ENCODE measurements at regions of chr3 and their contacts with region 1.

Region 1: DNA sequence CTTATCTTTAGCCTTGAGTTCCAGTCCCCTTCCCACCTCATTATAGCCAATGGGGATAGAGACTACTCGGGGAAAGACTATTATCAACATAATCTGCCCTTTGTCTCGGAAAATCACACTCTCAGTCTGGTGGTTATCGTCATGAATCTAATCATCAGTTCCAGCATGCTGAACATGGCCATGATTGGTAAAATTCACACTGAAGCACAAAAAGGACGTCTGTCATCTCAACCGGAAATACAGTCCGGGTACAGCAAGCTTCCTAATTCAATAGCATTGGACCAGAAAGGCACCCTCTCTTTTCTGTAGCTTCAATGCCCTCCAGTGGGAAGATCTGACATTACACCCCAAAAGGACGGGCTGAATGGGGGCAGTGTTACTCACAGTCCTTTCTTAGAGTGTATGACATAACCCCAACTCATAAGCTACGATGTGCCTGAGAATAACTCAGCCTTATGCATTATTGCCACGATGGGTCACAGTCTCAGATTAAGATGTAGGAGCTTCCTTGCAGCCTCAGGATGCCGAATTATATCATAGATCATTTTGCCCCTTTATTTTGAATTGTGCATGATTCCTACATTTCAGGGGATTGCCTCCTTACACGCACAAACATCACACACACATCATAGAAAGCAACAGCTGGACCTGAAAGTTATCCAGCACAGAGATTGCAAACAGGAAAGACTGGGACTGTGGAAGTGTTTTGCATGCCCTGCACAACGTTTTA is 390.4 kb upstream of the LMCD1 start:
- DNase-seq: peak; percentile 64 to 76
- H3K4me3 ChIP-seq: no peak overlapping the region
- H3K4me3 Mint-ChIP-seq: no peak overlapping the region
- H3K27ac Mint-ChIP-seq: no peak overlapping the region
- H3K4me1 ChIP-seq: no peaks in the 10 kb centered on the region
- H3K4me1 Mint-ChIP-seq: no peaks in the 10 kb centered on the region
- H3K27me3 ChIP-seq: no peaks in the 10 kb centered on the region
- H3K27me3 Mint-ChIP-seq: peaks cover 8% of the 10 kb centered on the region
- CTCF ChIP-seq: peak; percentile 68 to 76

Region 2: GRCh38 chr3:7484636-7485035 is 626.6 kb before region 1 on chr3:
- CTCF ChIA-PET with region 1: no interaction called
- POLR2A ChIA-PET with region 1: no interaction called
- intact Hi-C with region 1: loop called (anchors 10 kb)
- DNase-seq: no peak
- H3K4me3 ChIP-seq: no peak overlapping the region
- H3K4me3 Mint-ChIP-seq: no peak overlapping the region
- H3K27ac Mint-ChIP-seq: no peak overlapping the region
- H3K4me1 ChIP-seq: no peaks in the 10 kb centered on the region
- H3K4me1 Mint-ChIP-seq: no peaks in the 10 kb centered on the region
- H3K27me3 ChIP-seq: no peaks in the 10 kb centered on the region
- H3K27me3 Mint-ChIP-seq: no peaks in the 10 kb centered on the region
- CTCF ChIP-seq: no peak

Region 3: GRCh38 chr3:7800006-7800780 is 311.0 kb before region 1 on chr3:
- CTCF ChIA-PET with region 1: interaction called, 18 read pairs
- POLR2A ChIA-PET with region 1: no interaction called
- intact Hi-C with region 1: loop called (anchors 1 kb)
- DNase-seq: no peak
- H3K4me3 ChIP-seq: no peak overlapping the region
- H3K4me3 Mint-ChIP-seq: no peak overlapping the region
- H3K27ac Mint-ChIP-seq: no peak overlapping the region
- H3K4me1 ChIP-seq: no peaks in the 10 kb centered on the region
- H3K4me1 Mint-ChIP-seq: no peaks in the 10 kb centered on the region
- H3K27me3 ChIP-seq: no peaks in the 10 kb centered on the region
- H3K27me3 Mint-ChIP-seq: peaks cover 26% of the 10 kb centered on the region
- CTCF ChIP-seq: peak in 1 of 2 experiments; percentile 39

Region 4: DNA sequence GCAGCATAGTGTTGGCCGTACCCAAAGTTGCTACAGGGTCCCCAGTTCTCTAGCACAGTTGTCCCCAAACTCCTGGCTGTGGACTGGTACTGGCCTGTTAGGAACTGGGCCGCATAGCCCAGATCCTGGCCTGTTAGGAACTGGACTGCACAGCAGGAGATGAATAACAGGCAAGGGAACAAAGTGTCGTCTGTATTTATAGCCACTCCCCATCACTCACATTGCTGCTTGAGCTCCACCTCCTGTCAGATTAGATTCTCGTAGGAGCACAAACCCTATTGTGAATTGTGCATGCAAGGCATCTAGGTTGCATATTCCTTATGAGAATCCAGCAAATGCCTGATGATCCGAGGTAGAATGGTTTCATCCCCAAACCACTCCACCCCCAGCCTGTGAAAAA is 213.6 kb before region 1 on chr3:
- CTCF ChIA-PET with region 1: no interaction called
- POLR2A ChIA-PET with region 1: no interaction called
- intact Hi-C with region 1: no loop called
- DNase-seq: no peak
- H3K4me3 ChIP-seq: no peak overlapping the region
- H3K4me3 Mint-ChIP-seq: no peak overlapping the region
- H3K27ac Mint-ChIP-seq: no peak overlapping the region
- H3K4me1 ChIP-seq: no peaks in the 10 kb centered on the region
- H3K4me1 Mint-ChIP-seq: no peaks in the 10 kb centered on the region
- H3K27me3 ChIP-seq: no peaks in the 10 kb centered on the region
- H3K27me3 Mint-ChIP-seq: peaks cover 2% of the 10 kb centered on the region
- CTCF ChIP-seq: no peak

Region 5: DNA sequence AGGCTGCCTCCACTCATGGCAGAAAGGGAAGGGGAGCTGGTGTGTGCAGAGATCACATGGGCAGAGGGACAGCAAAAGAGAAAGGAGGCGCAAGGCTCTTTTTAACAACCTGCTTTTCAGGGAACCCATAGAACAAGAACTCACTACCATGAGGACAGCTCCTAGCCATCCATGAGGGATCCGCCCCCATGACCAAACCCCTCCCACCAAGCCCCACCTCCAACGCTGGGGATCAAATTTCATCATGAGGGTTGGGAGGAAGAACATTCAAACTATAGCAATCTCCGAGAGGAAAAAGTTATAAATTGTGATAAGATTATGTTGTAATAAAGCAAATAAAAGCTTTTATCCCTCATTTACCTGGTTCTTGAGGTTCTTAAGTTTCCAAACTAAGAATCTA is 305.7 kb after region 1 on chr3:
- CTCF ChIA-PET with region 1: interaction called, 3 read pairs
- POLR2A ChIA-PET with region 1: no interaction called
- intact Hi-C with region 1: loop called (anchors 5 kb)
- DNase-seq: peak in 1 of 2 experiments; percentile 37
- H3K4me3 ChIP-seq: no peak overlapping the region
- H3K4me3 Mint-ChIP-seq: no peak overlapping the region
- H3K27ac Mint-ChIP-seq: no peak overlapping the region
- H3K4me1 ChIP-seq: no peaks in the 10 kb centered on the region
- H3K4me1 Mint-ChIP-seq: no peaks in the 10 kb centered on the region
- H3K27me3 ChIP-seq: no peaks in the 10 kb centered on the region
- H3K27me3 Mint-ChIP-seq: peaks cover 8% of the 10 kb centered on the region
- CTCF ChIP-seq: no peak

Region 6: DNA sequence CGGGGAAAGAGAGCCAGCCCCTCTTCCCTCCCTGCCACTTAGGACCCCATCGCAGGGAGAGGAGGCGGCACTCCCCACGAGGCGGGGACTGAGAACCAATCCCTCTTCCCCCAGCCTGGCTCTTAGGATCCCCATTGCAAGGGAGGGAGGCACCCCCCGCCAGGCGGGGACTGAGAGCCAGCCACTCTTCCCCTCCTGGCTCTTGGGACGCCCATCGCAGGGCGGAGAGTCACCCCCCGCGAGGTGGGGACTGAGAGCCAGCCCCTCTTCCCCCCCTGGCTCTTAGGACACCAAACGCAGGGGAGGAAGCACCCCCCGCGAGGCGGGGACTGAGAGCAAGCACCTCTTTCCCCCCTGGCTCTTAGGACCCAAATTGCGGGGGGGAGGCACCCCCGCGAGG is 567.5 kb after region 1 on chr3:
- CTCF ChIA-PET with region 1: no interaction called
- POLR2A ChIA-PET with region 1: no interaction called
- intact Hi-C with region 1: no loop called
- DNase-seq: no peak
- H3K4me3 ChIP-seq: no peak overlapping the region
- H3K4me3 Mint-ChIP-seq: no peak overlapping the region
- H3K27ac Mint-ChIP-seq: no peak overlapping the region
- H3K4me1 ChIP-seq: peaks cover 6% of the 10 kb centered on the region
- H3K4me1 Mint-ChIP-seq: peaks cover 7% of the 10 kb centered on the region
- H3K27me3 ChIP-seq: no peaks in the 10 kb centered on the region
- H3K27me3 Mint-ChIP-seq: no peaks in the 10 kb centered on the region
- CTCF ChIP-seq: no peak

Measured in Caco-2 (cell line).